Lower leg skin (tissue), 4 donors: ENCODE measurements at regions of chr3 and their contacts with region 1.

Region 1: GRCh38 chr3:66138336-66139313 is 82.2 kb upstream of the SLC25A26 start:
- DNase-seq: peak in 1 of 2 donors; percentile 26
- H3K4me3 ChIP-seq: no peak overlapping the region
- CTCF ChIP-seq: no peak
- POLR2A ChIP-seq: no peak

Region 2: GRCh38 chr3:65785065-65785645 is 353.5 kb before region 1 on chr3:
- intact Hi-C with region 1: loop called (anchors 5 kb)
- DNase-seq: no peak
- H3K4me3 ChIP-seq: no peak overlapping the region
- CTCF ChIP-seq: peak in 1 of 3 donors; percentile 39
- POLR2A ChIP-seq: no peak

Region 3: DNA sequence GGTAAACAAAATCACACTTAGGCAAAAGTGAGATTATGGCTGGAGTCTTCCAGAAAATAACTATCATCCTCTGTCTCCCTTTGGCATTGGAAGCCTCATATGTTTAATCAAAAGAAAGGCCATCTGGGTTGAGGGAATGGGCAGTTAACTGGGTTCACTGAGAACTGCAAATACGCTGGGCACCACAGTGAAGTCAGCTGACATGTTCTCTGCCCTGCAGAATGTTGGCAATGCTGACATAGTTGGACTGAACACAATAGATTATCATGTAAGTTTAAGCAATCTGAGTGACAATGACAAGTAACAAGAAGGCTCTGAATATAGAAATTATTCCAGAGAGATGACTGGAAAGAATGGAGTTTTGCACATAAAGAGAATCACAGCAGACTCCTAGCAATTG is 38.4 kb after region 1 on chr3:
- intact Hi-C with region 1: no loop called
- DNase-seq: no peak
- H3K4me3 ChIP-seq: no peak overlapping the region
- CTCF ChIP-seq: no peak
- POLR2A ChIP-seq: no peak